ENCODE measurements at regions of chr4 and their contacts with region 1.

Region 1: GRCh38 chr4:128287871-128288688 is 467 bp upstream of the PGRMC2 start:
- DNase-seq: peak; percentile 99 to 100 (median 100)
- ATAC-seq: peak; percentile 79
- H3K4me3 ChIP-seq: peak overlapping the region; percentile 69 to 91
- H3K4me3 Mint-ChIP-seq: peak overlapping the region; percentile 97
- H3K27ac ChIP-seq: peak overlapping the region; percentile 95 to 98
- H3K27ac Mint-ChIP-seq: peak overlapping the region; percentile 97
- H3K4me1 ChIP-seq: peaks cover 28% of the 10 kb centered on the region
- H3K4me1 Mint-ChIP-seq: peaks cover 45% of the 10 kb centered on the region
- H3K27me3 ChIP-seq: no peaks in the 10 kb centered on the region
- H3K27me3 Mint-ChIP-seq: no peaks in the 10 kb centered on the region
- CTCF ChIP-seq: no peak

Region 2: GRCh38 chr4:127880764-127881562 is 407.1 kb before region 1 on chr4 and contains the start of gene PLK4:
- CTCF ChIA-PET with region 1: no interaction called
- POLR2A ChIA-PET with region 1: no interaction called
- intact Hi-C with region 1: loop called (anchors 1 to 5 kb)
- DNase-seq: peak; percentile 87 to 97 (median 94)
- ATAC-seq: peak; percentile 92
- H3K4me3 ChIP-seq: peak within 1 kb of the TSS; percentile 75 to 84
- H3K4me3 Mint-ChIP-seq: peak within 1 kb of the TSS; percentile 98
- H3K27ac ChIP-seq: peak within 1 kb of the TSS; percentile 71 to 87
- H3K27ac Mint-ChIP-seq: peak within 1 kb of the TSS; percentile 97
- H3K4me1 ChIP-seq: peaks cover 19% of the 10 kb centered on the region
- H3K4me1 Mint-ChIP-seq: peaks cover 23% of the 10 kb centered on the region
- H3K27me3 ChIP-seq: no peaks in the 10 kb centered on the region
- H3K27me3 Mint-ChIP-seq: no peaks in the 10 kb centered on the region
- CTCF ChIP-seq: no peak
- total RNA-seq, gene PLK4: 4.5 to 5.9 TPM

Region 3: DNA sequence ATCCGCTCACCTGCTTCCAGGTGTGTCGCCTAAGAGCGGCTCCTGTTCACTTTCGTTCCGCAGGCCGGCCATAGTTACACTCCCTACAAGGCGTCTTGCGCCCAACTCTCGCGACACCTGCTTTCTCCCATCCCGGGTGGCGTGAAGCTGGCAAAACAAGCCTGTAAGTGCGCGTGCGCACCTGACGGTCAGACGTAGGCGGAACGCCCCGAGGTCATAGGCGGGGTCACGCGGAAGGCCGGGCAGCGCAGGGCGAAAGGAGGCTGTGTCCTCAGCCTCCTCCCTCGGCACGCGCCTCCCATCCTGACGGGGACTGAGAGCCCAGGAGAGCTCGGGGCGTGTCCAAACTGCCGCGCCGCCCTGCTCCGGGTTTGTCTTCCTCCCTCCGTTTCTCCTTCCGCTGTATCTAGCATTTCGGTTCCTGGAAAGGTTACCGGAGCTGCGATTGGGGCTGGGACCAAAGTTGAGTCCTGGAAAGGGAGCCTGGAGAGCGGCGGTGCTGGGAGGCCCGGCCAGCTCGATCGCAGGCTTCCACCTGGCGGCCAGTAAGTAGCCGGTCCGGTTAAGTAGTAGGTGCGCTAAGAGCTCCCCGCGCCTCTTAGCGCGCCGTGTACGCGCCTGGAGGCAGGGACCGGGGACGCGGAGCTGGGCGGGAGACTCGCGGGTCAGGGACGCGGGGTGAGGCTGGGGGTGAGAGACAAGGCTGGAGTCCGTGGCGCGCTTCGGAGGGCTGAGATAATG is 322.8 kb before region 1 on chr4 and contains the starts of genes ABHD18 and MFSD8:
- CTCF ChIA-PET with region 1: no interaction called
- POLR2A ChIA-PET with region 1: interaction called, 12 read pairs
- intact Hi-C with region 1: loop called (anchors 1 to 2 kb)
- DNase-seq: peak; percentile 96 to 100 (median 99)
- ATAC-seq: peak; percentile 85
- H3K4me3 ChIP-seq: peak within 1 kb of the TSS; percentile 92 to 98
- H3K4me3 Mint-ChIP-seq: peak within 1 kb of the TSS; percentile 94
- H3K27ac ChIP-seq: peak within 1 kb of the TSS; percentile 91 to 96
- H3K27ac Mint-ChIP-seq: peak within 1 kb of the TSS; percentile 96
- H3K4me1 ChIP-seq: peaks cover 27% of the 10 kb centered on the region
- H3K4me1 Mint-ChIP-seq: peaks cover 49% of the 10 kb centered on the region
- H3K27me3 ChIP-seq: no peaks in the 10 kb centered on the region
- H3K27me3 Mint-ChIP-seq: no peaks in the 10 kb centered on the region
- CTCF ChIP-seq: no peak
- total RNA-seq, gene ABHD18: 13.3 to 13.5 TPM
- total RNA-seq, gene MFSD8: 26.1 to 27.1 TPM

Region 4: GRCh38 chr4:128060699-128061565 is 227.1 kb before region 1 on chr4 and contains the start of gene LARP1B:
- CTCF ChIA-PET with region 1: no interaction called
- POLR2A ChIA-PET with region 1: interaction called, 8 read pairs
- intact Hi-C with region 1: loop called (anchors 1 to 2 kb)
- DNase-seq: peak; percentile 87 to 95 (median 91)
- ATAC-seq: peak; percentile 90
- H3K4me3 ChIP-seq: peak within 1 kb of the TSS; percentile 55 to 73
- H3K4me3 Mint-ChIP-seq: peak within 1 kb of the TSS; percentile 84
- H3K27ac ChIP-seq: peak within 1 kb of the TSS; percentile 79 to 86
- H3K27ac Mint-ChIP-seq: peak within 1 kb of the TSS; percentile 92
- H3K4me1 ChIP-seq: peaks cover 5% of the 10 kb centered on the region
- H3K4me1 Mint-ChIP-seq: peaks cover 12% of the 10 kb centered on the region
- H3K27me3 ChIP-seq: no peaks in the 10 kb centered on the region
- H3K27me3 Mint-ChIP-seq: no peaks in the 10 kb centered on the region
- CTCF ChIP-seq: no peak
- total RNA-seq, gene LARP1B: 10.0 to 10.1 TPM

Region 5: DNA sequence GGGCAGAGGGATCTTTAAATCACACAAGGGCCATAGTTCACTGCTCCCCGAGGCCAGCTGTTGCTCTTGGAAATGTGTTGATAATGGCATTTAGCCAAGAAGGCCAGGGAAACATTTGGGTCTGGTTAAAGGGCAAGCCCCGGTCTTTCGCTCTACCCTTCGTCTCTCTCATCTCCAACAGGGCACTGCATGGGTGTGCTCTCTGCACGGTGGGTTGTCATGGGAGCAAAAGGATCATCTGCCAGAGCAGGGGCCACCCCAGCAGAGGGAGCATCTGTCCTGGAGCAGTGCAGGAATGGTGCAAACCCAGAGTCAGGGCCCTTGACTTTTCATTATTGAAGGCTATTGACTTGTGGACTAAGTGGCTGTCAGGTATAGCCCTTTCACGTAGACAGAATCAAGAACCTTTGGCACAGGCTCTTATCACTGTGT is 22.2 kb after region 1 on chr4:
- CTCF ChIA-PET with region 1: no interaction called
- POLR2A ChIA-PET with region 1: no interaction called
- intact Hi-C with region 1: no loop called
- DNase-seq: no peak
- ATAC-seq: no peak
- H3K4me3 ChIP-seq: no peak overlapping the region
- H3K4me3 Mint-ChIP-seq: no peak overlapping the region
- H3K27ac ChIP-seq: no peak overlapping the region
- H3K27ac Mint-ChIP-seq: no peak overlapping the region
- H3K4me1 ChIP-seq: no peaks in the 10 kb centered on the region
- H3K4me1 Mint-ChIP-seq: no peaks in the 10 kb centered on the region
- H3K27me3 ChIP-seq: no peaks in the 10 kb centered on the region
- H3K27me3 Mint-ChIP-seq: no peaks in the 10 kb centered on the region
- CTCF ChIP-seq: no peak

Region 6: GRCh38 chr4:128454281-128455075 is 166.4 kb after region 1 on chr4:
- CTCF ChIA-PET with region 1: no interaction called
- POLR2A ChIA-PET with region 1: no interaction called
- intact Hi-C with region 1: loop called in 1 of 2 experiments (anchors 10 kb)
- DNase-seq: peak; percentile 21 to 80 (median 65)
- ATAC-seq: peak; percentile 100
- H3K4me3 ChIP-seq: no peak overlapping the region
- H3K4me3 Mint-ChIP-seq: no peak overlapping the region
- H3K27ac ChIP-seq: no peak overlapping the region
- H3K27ac Mint-ChIP-seq: no peak overlapping the region
- H3K4me1 ChIP-seq: no peaks in the 10 kb centered on the region
- H3K4me1 Mint-ChIP-seq: peaks cover 7% of the 10 kb centered on the region
- H3K27me3 ChIP-seq: no peaks in the 10 kb centered on the region
- H3K27me3 Mint-ChIP-seq: peaks cover 7% of the 10 kb centered on the region
- CTCF ChIP-seq: peak; percentile 65

Region 7: DNA sequence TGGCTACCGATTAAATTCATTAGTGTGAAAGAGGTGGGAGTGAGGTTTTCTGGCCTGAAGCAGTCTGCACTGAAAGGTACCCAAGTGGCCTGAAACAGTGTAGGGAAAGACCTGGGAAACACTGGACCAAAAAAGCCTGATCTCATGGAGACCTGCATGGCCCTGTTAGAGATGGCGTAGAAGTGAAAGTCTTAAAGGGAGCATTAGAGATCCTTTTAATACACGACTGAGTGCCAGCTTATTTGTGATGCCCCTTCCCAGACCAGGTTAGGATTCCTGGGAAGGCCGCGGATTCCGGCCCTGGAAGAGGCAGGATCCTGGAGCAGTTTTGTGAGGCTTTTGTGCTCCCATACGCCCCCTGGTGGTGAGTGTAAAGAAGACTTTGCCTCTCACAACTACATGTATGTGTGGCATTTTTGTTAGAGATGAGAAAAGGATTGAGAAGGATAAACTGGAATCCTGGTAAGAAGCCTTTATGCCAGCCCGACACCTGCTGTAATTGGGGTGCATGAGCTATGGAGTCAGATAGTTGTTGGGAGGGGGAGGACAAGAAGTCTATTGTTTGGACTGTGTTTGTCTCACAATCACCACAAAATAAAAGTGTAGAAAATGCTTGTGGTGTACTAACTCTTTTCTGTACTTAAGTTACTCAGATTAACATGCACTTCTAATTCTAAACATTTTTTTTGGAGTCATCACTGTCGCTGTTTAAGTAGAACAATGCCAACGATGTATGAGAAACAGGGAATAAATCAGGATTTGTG is 575.4 kb after region 1 on chr4:
- CTCF ChIA-PET with region 1: interaction called, 4 read pairs
- POLR2A ChIA-PET with region 1: no interaction called
- intact Hi-C with region 1: loop called in 1 of 2 experiments (anchors 5 kb)
- DNase-seq: peak; percentile 24 to 80 (median 67)
- ATAC-seq: peak; percentile 26
- H3K4me3 ChIP-seq: no peak overlapping the region
- H3K4me3 Mint-ChIP-seq: no peak overlapping the region
- H3K27ac ChIP-seq: peak overlapping the region in 1 of 2 experiments; percentile 52
- H3K27ac Mint-ChIP-seq: peak overlapping the region; percentile 75
- H3K4me1 ChIP-seq: peaks cover 24% of the 10 kb centered on the region
- H3K4me1 Mint-ChIP-seq: peaks cover 35% of the 10 kb centered on the region
- H3K27me3 ChIP-seq: no peaks in the 10 kb centered on the region
- H3K27me3 Mint-ChIP-seq: no peaks in the 10 kb centered on the region
- CTCF ChIP-seq: peak; percentile 78

Region 8: DNA sequence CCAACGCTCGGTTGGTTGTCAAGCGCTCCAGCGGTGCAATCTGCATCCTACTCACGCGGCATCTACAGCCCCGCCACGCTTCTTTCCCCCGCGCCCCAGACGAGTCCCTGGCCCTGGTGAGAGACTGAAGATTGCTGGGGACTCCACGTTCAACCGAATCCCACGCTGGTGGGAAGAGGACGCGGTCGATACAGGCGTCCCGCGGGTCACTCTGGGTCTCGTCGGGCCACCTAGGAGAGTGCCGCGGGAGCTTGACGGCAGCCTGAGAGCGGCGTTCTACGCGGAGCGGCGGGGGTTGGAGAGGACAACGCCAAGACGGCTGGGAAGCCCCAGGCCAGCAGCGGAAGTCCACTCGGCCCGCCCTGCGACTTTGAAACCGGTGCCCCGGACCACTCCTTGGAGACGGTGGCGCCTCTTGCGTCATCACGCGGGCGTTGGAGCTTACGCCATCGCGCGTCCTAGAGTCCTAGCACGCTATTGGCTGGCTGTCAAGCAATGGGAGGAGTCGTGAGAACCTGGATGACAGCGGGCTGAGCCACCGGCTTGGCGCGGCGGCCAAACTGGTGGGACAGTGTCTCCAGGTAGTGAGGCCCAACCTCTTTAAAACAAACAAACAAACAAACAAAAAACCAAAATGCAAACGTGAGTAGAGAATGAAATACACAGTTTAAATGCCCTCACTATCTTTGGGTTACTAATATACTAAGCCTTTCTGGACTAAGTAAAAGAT is 805.3 kb after region 1 on chr4 and contains the start of gene SCLT1:
- CTCF ChIA-PET with region 1: no interaction called
- POLR2A ChIA-PET with region 1: no interaction called
- intact Hi-C with region 1: loop called (anchors 1 to 2 kb)
- DNase-seq: peak; percentile 88 to 99 (median 96)
- ATAC-seq: peak; percentile 92
- H3K4me3 ChIP-seq: peak within 1 kb of the TSS; percentile 87 to 94
- H3K4me3 Mint-ChIP-seq: peak within 1 kb of the TSS; percentile 24
- H3K27ac ChIP-seq: peak within 1 kb of the TSS; percentile 94 to 98
- H3K27ac Mint-ChIP-seq: no peak within 1 kb of the TSS
- H3K4me1 ChIP-seq: peaks cover 40% of the 10 kb centered on the region
- H3K4me1 Mint-ChIP-seq: peaks cover 49% of the 10 kb centered on the region
- H3K27me3 ChIP-seq: no peaks in the 10 kb centered on the region
- H3K27me3 Mint-ChIP-seq: no peaks in the 10 kb centered on the region
- CTCF ChIP-seq: no peak
- total RNA-seq, gene SCLT1: 19.8 to 21.7 TPM

Measured in CD8-positive, alpha-beta T cell (primary cell).